GM18951 (cell line): ENCODE measurements at regions of chr12 and their contacts with region 1.

Region 1: GRCh38 chr12:26097046-26097878 is 27.6 kb downstream of the BHLHE41 start:
- POLR2A ChIP-seq: no peak

Region 2: DNA sequence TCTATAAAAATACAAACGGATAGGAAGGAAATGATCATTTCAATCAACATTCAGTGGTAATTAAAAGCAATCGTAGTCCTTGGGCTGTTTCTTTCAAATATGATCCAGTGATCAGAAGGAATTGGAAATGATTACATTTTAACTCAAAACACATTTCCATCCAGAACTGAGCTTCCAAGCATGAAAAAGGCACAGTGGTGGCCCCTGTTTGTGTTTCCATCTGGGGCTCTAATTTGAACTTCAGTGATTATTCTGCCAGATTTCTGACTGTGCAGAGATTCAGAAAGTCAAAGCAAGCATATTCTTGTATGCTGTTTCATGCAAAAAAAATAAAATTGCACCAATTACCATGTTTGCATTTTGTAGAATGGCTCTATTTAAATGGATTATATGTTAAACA is 387.1 kb before region 1 on chr12:
- in situ Hi-C with region 1: no loop called
- POLR2A ChIP-seq: no peak

Region 3: GRCh38 chr12:26056335-26056734 is 40.9 kb before region 1 on chr12:
- in situ Hi-C with region 1: no loop called
- POLR2A ChIP-seq: no peak

Region 4: GRCh38 chr12:26629864-26630263 is 532.6 kb after region 1 on chr12:
- in situ Hi-C with region 1: loop called (anchors 25 kb)
- POLR2A ChIP-seq: no peak

Region 5: GRCh38 chr12:26884765-26885576 is 787.7 kb after region 1 on chr12:
- in situ Hi-C with region 1: loop called (anchors 25 kb)
- POLR2A ChIP-seq: no peak